ENCODE measurements at regions of chr22 and their contacts with region 1.

Region 1: GRCh38 chr22:42330170-42330569 is 59.7 kb upstream of the TCF20 start:
- DNase-seq: no peak
- H3K4me3 ChIP-seq: no peak overlapping the region
- H3K27ac ChIP-seq: no peak overlapping the region
- H3K4me1 ChIP-seq: no peaks in the 10 kb centered on the region
- H3K27me3 ChIP-seq: no peaks in the 10 kb centered on the region
- CTCF ChIP-seq: no peak
- POLR2A ChIP-seq: no peak

Region 2: DNA sequence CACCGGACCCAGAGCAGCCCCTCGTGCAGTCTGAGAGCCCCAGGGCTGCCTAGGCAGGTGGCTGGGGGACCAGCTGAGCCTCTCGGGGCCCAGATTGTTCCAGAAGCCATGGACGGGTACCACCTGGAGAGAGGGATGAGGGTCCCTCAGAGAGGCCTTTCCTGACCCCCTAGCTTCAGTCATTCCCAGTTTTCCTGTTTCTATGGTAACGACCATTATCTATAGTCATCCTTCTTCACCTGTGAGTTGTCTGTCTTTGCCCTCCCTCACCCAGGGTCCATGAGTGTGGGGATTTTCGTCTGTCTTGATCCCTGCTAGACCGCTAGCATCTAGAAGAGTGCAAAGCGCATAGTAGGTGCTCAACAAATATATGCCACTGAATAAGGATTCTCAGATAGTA is 16.6 kb after region 1 on chr22:
- CTCF ChIA-PET with region 1: no interaction called
- POLR2A ChIA-PET with region 1: no interaction called
- dilution Hi-C with region 1: no loop called
- intact Hi-C with region 1: loop called (anchors 1 kb)
- DNase-seq: no peak
- H3K4me3 ChIP-seq: no peak overlapping the region
- H3K27ac ChIP-seq: no peak overlapping the region
- H3K4me1 ChIP-seq: no peaks in the 10 kb centered on the region
- H3K27me3 ChIP-seq: peaks cover 2 to 7% of the 10 kb centered on the region in 2 experiments
- CTCF ChIP-seq: no peak
- POLR2A ChIP-seq: no peak